Activated CD8-positive, alpha-beta T cell treated with anti-CD3 and anti-CD28 coated beads for 36 hours (primary cell): ENCODE measurements at regions of chr12 and their contacts with region 1.

Region 1: DNA sequence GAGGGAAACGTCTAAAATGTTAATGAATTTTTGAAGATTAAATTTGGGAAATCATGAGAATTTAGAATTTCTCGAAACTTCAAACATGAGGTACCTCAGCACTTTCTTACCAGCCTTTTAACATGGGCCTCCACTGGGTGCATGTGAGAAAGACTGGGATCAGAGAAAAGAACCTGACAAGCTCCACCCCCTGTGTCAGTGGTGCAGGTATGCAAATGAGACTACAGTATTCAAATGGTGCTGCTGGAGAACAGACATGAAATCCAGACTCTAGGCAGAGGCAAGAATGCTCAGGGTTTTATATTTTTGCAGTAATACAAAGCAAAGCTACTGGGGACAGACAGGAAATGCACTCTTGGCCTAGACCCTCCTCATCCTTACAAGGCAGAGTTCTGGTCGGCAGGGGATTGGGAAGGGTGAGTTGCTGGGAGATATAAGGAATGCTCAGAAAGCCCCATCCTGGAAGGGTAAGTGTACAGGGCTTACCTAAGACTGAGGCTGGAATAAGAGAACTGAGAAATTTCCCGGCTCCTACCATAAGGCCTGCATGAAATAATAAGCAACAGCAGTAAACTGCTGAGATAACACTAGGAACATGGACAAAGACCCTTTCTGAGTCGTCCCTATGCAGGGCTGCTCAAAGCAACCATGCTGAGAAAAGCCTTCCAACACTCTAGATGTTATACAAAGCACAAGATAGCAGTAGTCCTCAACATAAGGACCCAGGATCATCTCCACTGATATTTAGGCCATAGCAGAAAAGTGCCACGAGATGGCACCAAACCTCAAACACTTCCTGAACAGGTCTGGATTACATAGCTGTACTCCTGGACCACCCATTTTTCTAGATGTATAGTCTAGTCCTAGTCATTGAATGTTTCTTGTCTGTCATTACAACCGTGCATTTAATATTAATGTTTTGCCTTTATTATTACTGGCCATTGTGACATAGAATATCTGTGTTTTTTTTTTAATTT is 260.8 kb downstream of the RASSF9 start:
- DNase-seq: peak; percentile 60
- ATAC-seq: peak; percentile 86
- H3K4me3 Mint-ChIP-seq: no peak overlapping the region
- H3K27ac Mint-ChIP-seq: no peak overlapping the region
- H3K4me1 Mint-ChIP-seq: no peaks in the 10 kb centered on the region
- H3K27me3 Mint-ChIP-seq: no peaks in the 10 kb centered on the region
- CTCF ChIP-seq: peak; percentile 49

Region 2: GRCh38 chr12:85394834-85395233 is 180.6 kb before region 1 on chr12:
- CTCF ChIA-PET with region 1: no interaction called
- POLR2A ChIA-PET with region 1: no interaction called
- intact Hi-C with region 1: no loop called
- DNase-seq: no peak
- ATAC-seq: no peak
- H3K4me3 Mint-ChIP-seq: no peak overlapping the region
- H3K27ac Mint-ChIP-seq: no peak overlapping the region
- H3K4me1 Mint-ChIP-seq: no peaks in the 10 kb centered on the region
- H3K27me3 Mint-ChIP-seq: no peaks in the 10 kb centered on the region
- CTCF ChIP-seq: no peak

Region 3: GRCh38 chr12:85441740-85442139 is 133.7 kb before region 1 on chr12:
- CTCF ChIA-PET with region 1: no interaction called
- POLR2A ChIA-PET with region 1: no interaction called
- intact Hi-C with region 1: no loop called
- DNase-seq: no peak
- ATAC-seq: no peak
- H3K4me3 Mint-ChIP-seq: no peak overlapping the region
- H3K27ac Mint-ChIP-seq: no peak overlapping the region
- H3K4me1 Mint-ChIP-seq: no peaks in the 10 kb centered on the region
- H3K27me3 Mint-ChIP-seq: peaks cover 3% of the 10 kb centered on the region
- CTCF ChIP-seq: no peak

Region 4: DNA sequence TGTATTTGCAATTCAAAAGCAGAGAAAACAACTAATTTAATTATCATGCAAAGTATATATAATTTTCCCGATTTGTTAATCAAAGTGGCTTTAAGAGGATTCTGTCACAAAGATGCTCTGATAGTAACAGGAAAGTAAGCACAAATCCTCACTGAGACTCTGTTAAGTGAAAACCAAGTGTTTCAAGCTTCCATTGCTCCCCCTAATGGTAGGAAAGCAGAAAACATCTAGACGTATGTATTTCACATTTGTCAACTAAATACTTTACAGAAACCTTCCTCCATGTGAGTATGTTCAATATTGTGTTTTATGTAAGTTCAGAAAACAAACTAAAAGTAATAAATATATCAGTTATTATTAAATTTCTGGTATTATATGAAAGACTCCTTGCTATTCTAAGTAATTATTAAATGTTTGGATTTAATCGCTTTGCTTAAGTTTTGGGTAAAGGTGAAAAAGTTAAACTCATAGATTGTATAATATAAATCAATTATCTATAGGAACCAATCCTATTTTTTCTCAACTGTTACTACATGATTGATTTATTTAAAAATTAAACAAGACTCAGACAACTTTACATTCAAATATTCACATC is 297.2 kb after region 1 on chr12:
- CTCF ChIA-PET with region 1: interaction called, 9 read pairs
- POLR2A ChIA-PET with region 1: no interaction called
- intact Hi-C with region 1: loop called (anchors 5 kb)
- DNase-seq: no peak
- ATAC-seq: peak; percentile 55
- H3K4me3 Mint-ChIP-seq: no peak overlapping the region
- H3K27ac Mint-ChIP-seq: no peak overlapping the region
- H3K4me1 Mint-ChIP-seq: no peaks in the 10 kb centered on the region
- H3K27me3 Mint-ChIP-seq: no peaks in the 10 kb centered on the region
- CTCF ChIP-seq: peak; percentile 71